Testis (tissue), 5 donors: ENCODE measurements at regions of chr1 and their contacts with region 1.

Region 1: DNA sequence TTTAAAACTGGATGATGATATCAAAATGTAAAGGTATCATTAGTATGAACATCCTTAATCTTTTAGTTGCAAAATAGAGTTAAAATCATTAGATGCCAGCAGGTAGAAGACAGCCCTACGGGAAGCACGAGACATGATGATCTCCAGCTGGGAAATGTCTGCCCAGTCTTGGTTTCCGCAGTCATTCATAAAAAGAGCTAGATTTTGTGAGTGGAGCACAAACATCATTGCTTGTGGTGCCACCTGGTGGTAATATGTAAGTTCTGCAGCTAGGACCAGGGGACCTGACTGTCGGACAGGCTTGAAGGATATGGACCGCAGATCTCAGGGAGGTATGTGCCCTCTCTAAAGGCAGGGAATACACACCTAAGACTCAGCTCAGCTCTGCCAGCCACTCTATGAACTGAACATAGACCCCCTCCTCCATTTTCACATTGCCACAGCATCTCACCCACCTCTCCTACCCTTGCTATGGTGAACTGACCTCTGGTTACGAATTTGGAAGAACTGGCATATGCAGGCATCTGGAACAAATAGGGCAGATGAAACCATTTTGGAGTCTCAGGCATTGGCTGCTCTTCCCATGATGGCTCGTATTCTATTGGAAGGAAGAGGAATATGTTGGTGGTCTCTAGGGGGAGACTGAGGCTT is 9.2 kb downstream of the FCMR start:
- DNase-seq: peak; percentile 84
- H3K4me3 ChIP-seq: no peak overlapping the region
- H3K27ac ChIP-seq: no peak overlapping the region
- H3K4me1 ChIP-seq: no peaks in the 10 kb centered on the region
- H3K27me3 ChIP-seq: no peaks in the 10 kb centered on the region
- CTCF ChIP-seq: peak; percentile 79 to 92 (median 82)
- POLR2A ChIP-seq: no peak

Region 2: GRCh38 chr1:206635080-206635977 is 277.2 kb before region 1 on chr1 and contains the start of gene DYRK3:
- intact Hi-C with region 1: loop called (anchors 10 kb)
- DNase-seq: peak; percentile 95
- H3K4me3 ChIP-seq: peak within 1 kb of the TSS; percentile 66 to 77
- H3K27ac ChIP-seq: peak within 1 kb of the TSS; percentile 36 to 71
- H3K4me1 ChIP-seq: peaks cover 7% of the 10 kb centered on the region
- H3K27me3 ChIP-seq: no peaks in the 10 kb centered on the region
- CTCF ChIP-seq: peak in 1 of 3 experiments; percentile 25
- POLR2A ChIP-seq: peak; percentile 48
- total RNA-seq, gene DYRK3: 36.4 to 40.6 TPM

Region 3: GRCh38 chr1:206734499-206735142 is 177.9 kb before region 1 on chr1:
- intact Hi-C with region 1: loop called (anchors 5 kb)
- DNase-seq: peak; percentile 62
- H3K4me3 ChIP-seq: no peak overlapping the region
- H3K27ac ChIP-seq: no peak overlapping the region
- H3K4me1 ChIP-seq: peaks cover 19% of the 10 kb centered on the region
- H3K27me3 ChIP-seq: no peaks in the 10 kb centered on the region
- CTCF ChIP-seq: peak; percentile 59 to 71 (median 69)
- POLR2A ChIP-seq: no peak

Region 4: DNA sequence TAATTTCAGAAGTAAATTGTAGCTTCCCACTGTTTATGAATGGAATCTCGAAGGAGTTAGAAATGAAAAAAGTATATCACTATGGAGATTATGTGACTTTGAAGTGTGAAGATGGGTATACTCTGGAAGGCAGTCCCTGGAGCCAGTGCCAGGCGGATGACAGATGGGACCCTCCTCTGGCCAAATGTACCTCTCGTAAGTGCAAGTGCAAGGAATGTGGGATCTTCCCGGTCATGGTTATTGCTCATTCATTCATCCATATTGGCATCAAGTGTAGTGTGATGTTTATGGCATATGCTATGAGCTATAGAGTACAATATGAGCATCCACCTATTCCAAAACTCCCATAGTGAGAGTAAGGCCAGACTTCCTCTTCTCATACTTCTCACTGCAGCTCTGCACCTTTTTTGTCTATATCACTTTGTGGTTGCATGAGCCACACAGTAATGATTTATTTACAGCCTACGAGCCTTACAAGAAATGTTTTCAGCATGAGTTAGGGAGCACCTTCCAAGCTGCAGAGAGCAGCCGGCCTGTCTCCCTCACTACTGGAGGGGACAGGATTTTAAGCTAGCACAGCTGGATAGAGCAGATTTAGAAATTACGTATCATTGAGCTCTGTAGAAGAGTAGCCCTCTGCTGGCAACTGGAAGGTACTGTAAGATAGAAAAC is 707.4 kb after region 1 on chr1:
- intact Hi-C with region 1: no loop called
- DNase-seq: peak; percentile 19
- H3K4me3 ChIP-seq: no peak overlapping the region
- H3K27ac ChIP-seq: no peak overlapping the region
- H3K4me1 ChIP-seq: no peaks in the 10 kb centered on the region
- H3K27me3 ChIP-seq: no peaks in the 10 kb centered on the region
- CTCF ChIP-seq: peak in 2 of 3 experiments; percentile 35 to 66
- POLR2A ChIP-seq: no peak